Mammary epithelial cell (primary cell): ENCODE measurements at regions of chr4 and their contacts with region 1.

Region 1: DNA sequence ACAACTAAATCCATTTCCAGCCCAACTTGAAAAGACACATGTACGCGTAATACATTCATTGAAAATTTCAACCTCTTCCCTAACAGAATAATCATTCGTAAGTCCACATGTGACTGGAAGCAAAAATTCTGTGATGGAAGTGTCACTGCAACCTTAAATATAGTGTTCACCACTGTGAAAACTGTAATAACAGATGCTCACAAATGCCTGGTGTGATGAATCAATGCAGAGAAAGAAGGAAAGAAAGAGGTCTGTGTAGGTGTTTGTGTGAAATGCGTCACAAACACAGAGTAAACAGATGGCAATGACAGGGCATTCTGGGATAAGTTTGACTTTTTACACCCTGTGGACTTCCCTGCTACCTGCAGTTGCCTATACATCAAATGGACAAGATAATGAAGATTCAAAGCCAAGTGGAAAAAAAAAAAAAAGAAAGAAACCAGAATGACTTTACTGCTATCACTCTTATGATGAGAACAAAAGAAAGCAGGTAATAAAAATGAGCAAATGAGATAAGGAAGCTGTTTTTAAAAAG is 123.3 kb downstream of the EPHA5 start:
- DNase-seq: no peak
- H3K4me3 ChIP-seq: no peak overlapping the region
- H3K27ac ChIP-seq: no peak overlapping the region
- H3K4me1 ChIP-seq: no peaks in the 10 kb centered on the region
- H3K27me3 ChIP-seq: peaks cover 2% of the 10 kb centered on the region
- CTCF ChIP-seq: no peak

Region 2: DNA sequence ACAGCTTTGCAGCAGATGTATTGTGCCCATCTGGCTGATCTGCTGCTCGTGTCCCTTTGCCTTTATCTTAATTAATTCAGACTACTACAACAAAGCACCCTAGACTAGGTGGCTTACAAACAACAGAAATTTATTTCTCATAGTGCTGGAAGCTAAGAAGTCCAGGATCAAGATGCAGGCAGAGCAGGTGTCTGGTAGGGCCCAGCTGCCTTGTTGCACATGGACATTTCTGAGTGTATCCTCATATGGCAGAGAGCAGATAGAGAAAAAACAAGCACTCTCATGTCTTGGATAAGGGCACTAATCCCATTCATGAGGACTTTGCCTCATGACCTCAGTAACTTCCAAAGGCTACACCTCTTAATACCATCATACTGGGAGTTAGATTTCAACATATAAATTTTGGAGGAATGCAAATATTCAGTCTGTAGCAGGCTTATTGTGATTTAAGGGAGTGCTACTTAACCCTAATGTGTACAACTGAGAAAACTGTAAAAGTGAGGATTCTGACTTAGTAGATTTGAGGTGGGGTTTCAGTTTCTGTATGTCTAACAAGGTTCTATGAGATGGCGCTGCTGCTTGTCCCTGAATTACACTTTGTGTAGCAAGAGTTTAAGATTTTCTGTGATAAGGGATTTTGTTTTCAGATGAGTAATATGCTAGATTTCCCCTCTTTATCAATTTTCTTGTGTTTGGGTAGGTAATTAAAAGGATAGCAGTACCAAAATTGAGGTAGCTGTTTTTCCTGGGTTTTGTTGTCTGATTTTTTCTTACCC is 664.5 kb before region 1 on chr4:
- CTCF ChIA-PET with region 1: no interaction called
- dilution Hi-C with region 1: no loop called
- in situ Hi-C with region 1: no loop called
- intact Hi-C with region 1: no loop called
- DNase-seq: no peak
- H3K4me3 ChIP-seq: no peak overlapping the region
- H3K27ac ChIP-seq: no peak overlapping the region
- H3K4me1 ChIP-seq: no peaks in the 10 kb centered on the region
- H3K27me3 ChIP-seq: no peaks in the 10 kb centered on the region
- CTCF ChIP-seq: no peak

Region 3: DNA sequence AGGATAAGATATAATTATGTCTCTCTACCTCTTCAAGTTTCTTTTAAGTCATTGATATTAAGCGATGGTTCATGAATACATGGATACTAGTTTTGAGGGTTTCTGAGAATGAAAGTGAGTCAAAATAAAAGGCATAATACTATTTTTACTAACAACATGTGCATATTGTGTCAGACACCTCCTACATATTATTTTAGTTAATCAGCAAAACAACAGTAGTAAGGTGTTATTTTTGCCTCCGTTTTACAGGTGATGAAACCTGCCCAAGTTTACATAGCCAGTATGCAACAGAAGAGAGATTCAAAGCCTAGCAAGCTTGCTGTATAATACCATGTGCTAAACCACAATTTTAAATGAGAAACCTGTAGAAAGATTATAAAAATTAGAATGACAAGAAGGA is 420.7 kb before region 1 on chr4:
- CTCF ChIA-PET with region 1: no interaction called
- dilution Hi-C with region 1: no loop called
- in situ Hi-C with region 1: no loop called
- intact Hi-C with region 1: no loop called
- DNase-seq: no peak
- H3K4me3 ChIP-seq: no peak overlapping the region
- H3K27ac ChIP-seq: no peak overlapping the region
- H3K4me1 ChIP-seq: no peaks in the 10 kb centered on the region
- H3K27me3 ChIP-seq: no peaks in the 10 kb centered on the region
- CTCF ChIP-seq: no peak

Region 4: GRCh38 chr4:65461781-65462180 is 85.2 kb before region 1 on chr4:
- CTCF ChIA-PET with region 1: no interaction called
- dilution Hi-C with region 1: no loop called
- in situ Hi-C with region 1: no loop called
- intact Hi-C with region 1: loop called (anchors 10 kb)
- DNase-seq: no peak
- H3K4me3 ChIP-seq: no peak overlapping the region
- H3K27ac ChIP-seq: no peak overlapping the region
- H3K4me1 ChIP-seq: no peaks in the 10 kb centered on the region
- H3K27me3 ChIP-seq: no peaks in the 10 kb centered on the region
- CTCF ChIP-seq: peak; percentile 20 to 33

Region 5: DNA sequence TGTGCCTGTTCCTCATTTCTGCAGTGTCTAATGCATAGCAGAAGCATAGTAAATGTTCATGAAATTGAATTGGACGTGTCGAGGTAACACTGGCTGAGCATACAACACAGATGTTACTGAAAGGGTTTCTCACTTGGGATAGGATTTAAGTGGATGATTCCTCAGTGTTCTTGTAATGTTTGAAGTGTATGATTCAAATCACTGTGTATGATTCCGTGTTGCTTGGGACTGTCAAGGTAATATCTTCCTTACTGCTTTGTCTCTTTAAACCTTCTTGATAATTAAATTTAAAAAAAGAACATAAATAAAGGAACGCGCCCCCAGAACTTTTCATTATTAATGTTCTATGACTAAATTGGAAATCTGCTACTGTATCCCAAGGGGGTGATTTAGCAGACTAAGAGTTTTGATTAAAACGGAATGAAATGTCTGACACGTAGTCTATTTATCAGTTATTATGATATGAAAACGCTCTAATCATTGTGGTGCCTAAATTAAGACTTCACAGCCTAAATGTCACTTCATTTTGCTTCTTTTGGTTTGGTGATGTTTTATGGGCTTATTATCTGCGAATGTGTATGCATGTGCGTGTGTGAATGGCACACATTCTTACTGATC is 820.2 kb after region 1 on chr4:
- CTCF ChIA-PET with region 1: no interaction called
- dilution Hi-C with region 1: no loop called
- in situ Hi-C with region 1: no loop called
- intact Hi-C with region 1: no loop called
- DNase-seq: no peak
- H3K4me3 ChIP-seq: no peak overlapping the region
- H3K27ac ChIP-seq: no peak overlapping the region
- H3K4me1 ChIP-seq: no peaks in the 10 kb centered on the region
- H3K27me3 ChIP-seq: no peaks in the 10 kb centered on the region
- CTCF ChIP-seq: no peak